ENCODE measurements at regions of chr15 and their contacts with region 1.

Region 1: DNA sequence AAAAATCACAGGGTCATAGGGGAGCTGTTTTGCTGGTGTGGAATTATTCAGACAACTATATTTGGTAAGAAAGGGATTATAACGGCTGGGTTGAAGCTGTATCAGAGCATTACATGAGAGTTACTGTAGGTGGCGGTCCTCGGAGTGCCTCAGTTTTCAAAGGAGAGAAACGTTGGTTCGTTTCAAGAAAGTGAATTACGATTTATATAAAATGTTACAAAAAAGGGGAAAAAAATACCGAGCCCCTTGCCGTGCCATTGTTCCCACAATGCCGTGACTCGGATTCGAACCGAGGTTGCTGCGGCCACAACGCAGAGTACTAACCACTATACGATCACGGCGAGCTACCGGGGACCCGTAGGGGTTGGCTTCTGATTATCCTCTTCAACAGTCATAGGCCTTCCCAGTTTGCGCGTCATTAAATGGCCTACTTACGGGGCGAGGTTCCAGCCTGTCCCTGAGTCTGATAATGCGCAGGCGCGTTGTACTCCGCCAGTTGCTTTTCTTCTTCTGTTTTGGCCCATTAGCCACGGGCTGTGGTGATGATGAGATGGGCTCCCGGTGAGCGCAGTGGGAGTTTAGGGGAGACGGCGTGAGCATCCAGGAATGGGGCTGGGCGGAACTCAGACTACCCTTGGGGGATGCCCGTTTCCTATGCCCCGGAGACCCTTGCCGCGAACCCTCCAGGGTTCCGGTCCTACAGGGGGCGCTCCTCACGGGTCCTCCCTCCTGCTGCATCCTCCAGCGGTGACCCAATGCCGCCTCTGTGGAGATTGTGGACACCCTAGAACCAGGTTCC is 10.8 kb upstream of the SHF start:
- DNase-seq: peak; percentile 96
- H3K4me3 ChIP-seq: peak overlapping the region; percentile 63 to 90 (median 81)
- H3K27ac ChIP-seq: peak overlapping the region; percentile 42
- H3K4me1 ChIP-seq: peaks cover 16% of the 10 kb centered on the region
- H3K27me3 ChIP-seq: no peaks in the 10 kb centered on the region
- CTCF ChIP-seq: peak; percentile 53 to 83

Region 2: GRCh38 chr15:44501768-44502366 is 696.7 kb before region 1 on chr15:
- CTCF ChIA-PET with region 1: no interaction called
- dilution Hi-C with region 1: no loop called
- in situ Hi-C with region 1: no loop called
- intact Hi-C with region 1: no loop called
- DNase-seq: peak; percentile 32
- H3K4me3 ChIP-seq: no peak overlapping the region
- H3K27ac ChIP-seq: no peak overlapping the region
- H3K4me1 ChIP-seq: no peaks in the 10 kb centered on the region
- H3K27me3 ChIP-seq: no peaks in the 10 kb centered on the region
- CTCF ChIP-seq: peak; percentile 54 to 63

Region 3: GRCh38 chr15:45166834-45167630 is 31.5 kb before region 1 on chr15:
- CTCF ChIA-PET with region 1: interaction called, 11 read pairs
- dilution Hi-C with region 1: no loop called
- in situ Hi-C with region 1: no loop called
- intact Hi-C with region 1: loop called (anchors 1 kb)
- DNase-seq: peak; percentile 44
- H3K4me3 ChIP-seq: peak overlapping the region; percentile 50 to 58 (median 54)
- H3K27ac ChIP-seq: peak overlapping the region; percentile 35
- H3K4me1 ChIP-seq: peaks cover 22% of the 10 kb centered on the region
- H3K27me3 ChIP-seq: no peaks in the 10 kb centered on the region
- CTCF ChIP-seq: peak; percentile 42 to 65

Region 4: DNA sequence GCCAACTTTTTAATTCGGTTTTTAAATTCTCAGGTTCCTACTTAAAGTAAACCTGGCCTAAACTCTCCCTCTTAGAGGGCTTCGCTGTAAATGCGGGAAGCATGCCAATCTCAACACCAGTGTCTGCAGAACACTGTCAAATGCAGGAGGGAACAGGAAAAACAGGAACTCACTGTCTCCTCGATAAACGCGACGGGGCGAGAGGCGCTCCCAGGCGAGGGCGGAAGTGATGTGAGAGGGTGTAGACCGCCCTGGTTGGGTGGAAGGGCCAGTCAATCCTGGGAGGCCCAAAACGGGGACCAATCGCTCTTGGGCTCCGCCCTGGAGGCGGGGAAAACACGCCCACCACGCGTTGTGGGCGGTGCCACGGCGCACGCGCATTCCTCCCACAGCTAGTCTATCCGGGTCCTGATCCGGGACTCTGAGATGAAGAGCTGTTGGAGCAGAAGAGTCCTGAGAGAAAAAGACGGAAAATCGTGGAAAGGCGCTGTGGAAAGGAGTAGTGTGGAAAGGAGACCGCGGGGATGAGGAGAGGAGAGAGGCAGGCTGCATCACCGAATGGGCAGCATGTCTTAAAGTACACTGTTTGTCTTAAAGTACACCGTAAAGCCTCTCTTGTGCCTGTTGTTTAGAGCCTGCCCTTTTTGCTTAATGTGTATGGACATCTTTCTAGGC is 80.6 kb after region 1 on chr15:
- CTCF ChIA-PET with region 1: interaction called, 3 read pairs
- dilution Hi-C with region 1: loop called (anchors 5 kb)
- in situ Hi-C with region 1: no loop called
- intact Hi-C with region 1: loop called (anchors 1 kb)
- DNase-seq: peak; percentile 98
- H3K4me3 ChIP-seq: peak overlapping the region; percentile 76 to 91 (median 87)
- H3K27ac ChIP-seq: peak overlapping the region; percentile 72
- H3K4me1 ChIP-seq: peaks cover 6% of the 10 kb centered on the region
- H3K27me3 ChIP-seq: no peaks in the 10 kb centered on the region
- CTCF ChIP-seq: no peak

Region 5: GRCh38 chr15:45402162-45402954 is 203.8 kb after region 1 on chr15:
- CTCF ChIA-PET with region 1: no interaction called
- dilution Hi-C with region 1: no loop called
- in situ Hi-C with region 1: loop called in 1 of 2 experiments (anchors 5 kb)
- intact Hi-C with region 1: loop called (anchors 2 kb)
- DNase-seq: peak; percentile 99
- H3K4me3 ChIP-seq: peak overlapping the region; percentile 79 to 99 (median 96)
- H3K27ac ChIP-seq: peak overlapping the region; percentile 63
- H3K4me1 ChIP-seq: peaks cover 20% of the 10 kb centered on the region
- H3K27me3 ChIP-seq: no peaks in the 10 kb centered on the region
- CTCF ChIP-seq: no peak

Region 6: DNA sequence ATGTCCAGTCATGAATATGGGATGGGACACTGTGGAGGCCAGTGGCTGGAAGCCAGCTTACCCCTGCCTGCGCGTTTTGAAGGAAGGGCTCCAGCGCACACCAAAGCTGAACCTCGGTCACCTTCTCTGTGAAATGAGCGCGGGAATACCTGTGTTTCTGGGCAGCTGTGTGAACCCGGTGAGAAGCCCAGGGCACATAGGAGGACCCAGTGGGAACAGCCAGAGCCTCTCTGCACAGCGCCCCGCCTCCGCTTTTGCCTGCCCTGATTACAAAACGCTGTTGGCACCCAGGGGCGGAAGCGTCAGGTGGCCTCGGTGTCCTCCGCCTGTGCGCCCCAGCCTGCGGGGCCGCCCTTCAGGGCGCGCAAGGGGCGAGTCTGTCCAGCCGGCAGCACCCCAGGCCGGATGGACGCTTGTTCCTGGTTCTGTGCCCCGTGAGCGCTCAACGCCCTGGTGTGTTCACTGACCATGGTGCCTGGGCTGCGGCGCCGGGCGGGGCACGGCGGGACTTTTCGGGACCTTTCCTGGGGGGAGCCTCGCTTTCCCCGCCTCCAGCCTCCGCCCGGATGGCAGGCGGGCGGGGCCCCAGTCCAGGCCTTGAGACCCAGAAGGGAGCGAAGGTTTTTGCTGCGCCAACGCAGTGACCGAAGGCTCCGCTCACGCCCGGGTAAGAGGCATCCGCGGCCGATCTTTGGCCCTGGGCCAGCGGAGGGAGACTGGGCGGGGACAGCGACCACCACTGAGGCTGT is 436.1 kb after region 1 on chr15 and contains the start of gene SQOR:
- CTCF ChIA-PET with region 1: no interaction called
- dilution Hi-C with region 1: no loop called
- in situ Hi-C with region 1: no loop called
- intact Hi-C with region 1: loop called (anchors 5 kb)
- DNase-seq: peak; percentile 92
- H3K4me3 ChIP-seq: peak within 1 kb of the TSS; percentile 65 to 79 (median 71)
- H3K27ac ChIP-seq: peak within 1 kb of the TSS; percentile 78
- H3K4me1 ChIP-seq: peaks cover 52% of the 10 kb centered on the region
- H3K27me3 ChIP-seq: no peaks in the 10 kb centered on the region
- CTCF ChIP-seq: no peak
- total RNA-seq, gene SQOR: 65.7 to 125 TPM

Measured in mammary epithelial cell (primary cell).